WTC11 (cell line): ENCODE measurements at regions of chr19 and their contacts with region 1.

Region 1: GRCh38 chr19:35822579-35822978 is 9.9 kb upstream of the PRODH2 start:
- DNase-seq: no peak
- ATAC-seq: peak; percentile 32; the same call in 1 of the 2 replicates
- H3K4me3 Mint-ChIP-seq: no peak overlapping the region
- H3K27ac Mint-ChIP-seq: no peak overlapping the region
- H3K4me1 Mint-ChIP-seq: peaks cover 3% of the 10 kb centered on the region
- H3K27me3 Mint-ChIP-seq: peaks cover 48% of the 10 kb centered on the region
- CTCF ChIP-seq: no peak

Region 2: DNA sequence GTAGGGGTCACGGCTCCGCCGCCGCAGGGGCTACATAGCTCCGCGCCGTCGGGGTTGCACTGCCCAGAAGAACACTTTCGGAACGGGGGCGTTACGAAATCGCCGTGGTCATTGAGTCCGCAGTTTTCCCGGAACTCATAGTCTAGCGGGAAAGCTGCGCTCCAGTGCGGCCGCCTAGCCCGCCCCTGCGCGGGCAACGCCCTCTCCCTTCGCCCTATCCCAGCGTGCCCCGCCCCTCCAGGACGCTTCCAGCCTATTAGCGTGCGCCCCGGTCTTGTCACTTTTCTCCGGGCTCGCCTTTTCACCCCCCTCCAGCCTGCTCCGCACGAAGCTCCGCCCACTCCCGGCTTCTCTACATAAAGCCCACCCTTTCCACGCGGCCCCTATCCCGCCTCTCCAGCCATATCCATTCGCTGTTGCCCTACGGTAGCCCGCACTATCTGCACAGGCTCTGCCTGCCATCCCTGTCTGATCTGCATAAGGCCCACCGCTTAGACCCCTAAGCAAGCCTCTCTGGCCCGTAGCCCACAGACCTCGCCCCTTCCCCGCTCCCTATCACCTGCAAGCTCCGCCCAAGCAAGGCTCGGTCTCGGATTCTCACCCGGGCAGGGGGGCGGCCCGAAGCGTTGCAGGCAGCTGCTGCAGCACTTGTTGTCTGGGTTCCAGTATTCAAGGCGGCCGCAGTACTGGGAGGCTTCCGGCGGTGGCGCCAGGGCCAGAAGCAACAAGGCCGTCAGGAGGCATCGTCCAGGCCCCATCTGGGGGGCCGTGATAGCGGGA is 82.0 kb before region 1 on chr19:
- CTCF ChIA-PET with region 1: interaction called, 11 read pairs
- POLR2A ChIA-PET with region 1: interaction called, 4 read pairs
- DNase-seq: peak; percentile 99
- ATAC-seq: peak; percentile 76
- H3K4me3 Mint-ChIP-seq: peak overlapping the region; percentile 81
- H3K27ac Mint-ChIP-seq: peak overlapping the region; percentile 99
- H3K4me1 Mint-ChIP-seq: peaks cover 11% of the 10 kb centered on the region
- H3K27me3 Mint-ChIP-seq: no peaks in the 10 kb centered on the region
- CTCF ChIP-seq: no peak

Region 3: DNA sequence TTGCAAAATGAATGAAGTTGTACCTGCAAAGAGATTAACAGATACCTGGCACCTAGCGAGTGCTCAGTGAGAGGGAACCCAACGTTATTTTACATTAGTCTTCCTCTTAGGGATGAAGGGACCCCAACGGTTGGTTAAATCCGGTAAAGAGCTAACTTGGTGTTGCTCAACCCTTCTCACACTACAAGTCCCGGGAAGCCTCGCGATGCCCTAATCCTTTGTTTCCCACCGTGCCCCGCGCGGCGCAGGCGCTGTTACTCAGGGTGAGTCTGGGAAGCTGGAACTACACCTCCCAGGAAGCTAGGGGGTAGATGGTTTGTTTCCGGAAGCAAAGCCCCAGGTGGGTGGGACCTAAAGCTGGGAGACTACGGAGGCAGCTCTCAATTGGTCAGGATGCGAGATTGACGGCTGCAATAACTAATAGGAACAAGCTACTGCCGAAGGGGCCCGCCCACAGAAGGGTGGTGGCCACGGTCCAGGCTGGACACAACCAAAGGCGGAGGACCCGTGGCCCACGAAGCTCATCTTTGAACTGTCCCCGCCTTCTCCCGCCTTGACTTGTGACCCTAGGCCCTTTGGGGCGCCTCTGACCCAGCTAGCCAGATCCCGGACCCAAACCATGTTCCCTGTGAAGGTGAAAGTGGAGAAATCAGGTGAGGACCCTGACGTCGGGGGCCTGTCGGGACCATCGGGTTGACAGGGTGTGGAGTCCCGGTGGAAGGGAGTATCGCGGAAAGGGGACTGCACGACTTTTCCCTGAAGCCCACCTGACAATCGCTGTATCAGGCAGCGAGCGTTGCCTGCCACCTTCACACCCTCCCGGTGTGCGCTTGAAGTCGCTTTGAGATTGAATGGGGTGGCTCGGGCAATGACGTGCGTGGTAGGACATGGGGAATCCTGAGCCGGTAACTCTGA is 74.2 kb before region 1 on chr19 and contains the start of gene LIN37:
- CTCF ChIA-PET with region 1: interaction called, 15 read pairs
- POLR2A ChIA-PET with region 1: no interaction called
- DNase-seq: peak; percentile 99
- ATAC-seq: peak; percentile 84
- H3K4me3 Mint-ChIP-seq: peak within 1 kb of the TSS; percentile 96
- H3K27ac Mint-ChIP-seq: peak within 1 kb of the TSS; percentile 85
- H3K4me1 Mint-ChIP-seq: peaks cover 21% of the 10 kb centered on the region
- H3K27me3 Mint-ChIP-seq: no peaks in the 10 kb centered on the region; the same call in 1 of the 2 replicates
- CTCF ChIP-seq: no peak
- total RNA-seq, gene LIN37: 4.7 to 6.4 TPM (median 5.6 TPM) in 3 replicates

Region 4: GRCh38 chr19:35797663-35798062 is 24.9 kb before region 1 on chr19:
- CTCF ChIA-PET with region 1: interaction called, 11 read pairs
- POLR2A ChIA-PET with region 1: interaction called, 4 read pairs
- DNase-seq: peak; percentile 69
- ATAC-seq: peak; percentile 86
- H3K4me3 Mint-ChIP-seq: peak overlapping the region; percentile 69
- H3K27ac Mint-ChIP-seq: no peak overlapping the region
- H3K4me1 Mint-ChIP-seq: peaks cover 12% of the 10 kb centered on the region
- H3K27me3 Mint-ChIP-seq: peaks cover 55% of the 10 kb centered on the region
- CTCF ChIP-seq: no peak

Region 5: DNA sequence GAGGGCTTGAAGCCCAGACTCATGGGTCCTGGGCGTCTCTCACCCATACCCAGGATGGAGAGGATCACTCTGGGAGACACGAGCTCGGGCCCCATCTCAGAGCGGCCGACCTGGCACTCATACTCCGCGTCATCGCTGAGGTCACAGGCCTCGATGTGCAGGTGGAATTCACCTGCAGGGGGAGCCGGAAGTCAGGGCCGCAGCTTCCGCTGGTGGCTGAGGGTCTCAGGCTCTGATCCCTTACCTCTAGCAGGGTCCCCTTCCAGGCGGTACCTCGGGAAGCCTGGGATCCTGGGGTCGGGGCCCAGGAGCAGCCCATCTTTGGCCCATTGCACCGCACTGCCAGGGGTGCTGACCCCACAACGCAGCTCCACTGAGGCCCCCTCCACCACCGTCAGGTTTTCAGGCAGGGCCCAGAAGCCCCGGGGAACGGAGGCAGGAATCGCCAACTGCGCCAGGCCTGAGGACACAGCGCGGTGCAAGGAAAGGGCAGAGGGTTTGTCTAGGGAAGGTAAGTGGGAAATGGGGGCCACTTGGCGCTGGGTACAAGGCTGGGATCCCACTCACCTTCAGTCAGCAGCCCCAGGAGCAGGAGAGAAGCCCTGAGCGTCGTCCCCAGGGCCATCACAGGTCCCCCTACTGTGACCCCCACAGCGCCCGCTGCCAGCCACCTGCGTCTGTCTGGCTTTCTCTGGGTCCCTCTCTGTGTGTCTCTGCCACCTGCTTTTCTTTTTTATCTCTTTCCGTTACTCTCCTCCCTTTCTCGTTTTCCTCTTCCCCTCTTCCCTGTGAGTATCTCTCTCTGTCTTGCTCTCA is 28.8 kb after region 1 on chr19:
- CTCF ChIA-PET with region 1: interaction called, 13 read pairs
- POLR2A ChIA-PET with region 1: no interaction called
- DNase-seq: peak; percentile 84
- ATAC-seq: peak; percentile 83
- H3K4me3 Mint-ChIP-seq: peak overlapping the region; percentile 53
- H3K27ac Mint-ChIP-seq: peak overlapping the region; percentile 36; the same call in 1 of the 2 replicates
- H3K4me1 Mint-ChIP-seq: peaks cover 29% of the 10 kb centered on the region
- H3K27me3 Mint-ChIP-seq: peaks cover 86% of the 10 kb centered on the region
- CTCF ChIP-seq: peak; percentile 46; the same call in 1 of the 2 replicates

Region 6: GRCh38 chr19:35899547-35900214 is 77.1 kb after region 1 on chr19:
- CTCF ChIA-PET with region 1: no interaction called
- POLR2A ChIA-PET with region 1: no interaction called
- DNase-seq: peak; percentile 60
- ATAC-seq: peak; percentile 6
- H3K4me3 Mint-ChIP-seq: peak overlapping the region; percentile 93
- H3K27ac Mint-ChIP-seq: peak overlapping the region; percentile 80; the same call in 1 of the 2 replicates
- H3K4me1 Mint-ChIP-seq: peaks cover 18% of the 10 kb centered on the region
- H3K27me3 Mint-ChIP-seq: peaks cover 18% of the 10 kb centered on the region
- CTCF ChIP-seq: no peak